GM23248 (cell line): ENCODE measurements at regions of chr5 and their contacts with region 1.

Region 1: DNA sequence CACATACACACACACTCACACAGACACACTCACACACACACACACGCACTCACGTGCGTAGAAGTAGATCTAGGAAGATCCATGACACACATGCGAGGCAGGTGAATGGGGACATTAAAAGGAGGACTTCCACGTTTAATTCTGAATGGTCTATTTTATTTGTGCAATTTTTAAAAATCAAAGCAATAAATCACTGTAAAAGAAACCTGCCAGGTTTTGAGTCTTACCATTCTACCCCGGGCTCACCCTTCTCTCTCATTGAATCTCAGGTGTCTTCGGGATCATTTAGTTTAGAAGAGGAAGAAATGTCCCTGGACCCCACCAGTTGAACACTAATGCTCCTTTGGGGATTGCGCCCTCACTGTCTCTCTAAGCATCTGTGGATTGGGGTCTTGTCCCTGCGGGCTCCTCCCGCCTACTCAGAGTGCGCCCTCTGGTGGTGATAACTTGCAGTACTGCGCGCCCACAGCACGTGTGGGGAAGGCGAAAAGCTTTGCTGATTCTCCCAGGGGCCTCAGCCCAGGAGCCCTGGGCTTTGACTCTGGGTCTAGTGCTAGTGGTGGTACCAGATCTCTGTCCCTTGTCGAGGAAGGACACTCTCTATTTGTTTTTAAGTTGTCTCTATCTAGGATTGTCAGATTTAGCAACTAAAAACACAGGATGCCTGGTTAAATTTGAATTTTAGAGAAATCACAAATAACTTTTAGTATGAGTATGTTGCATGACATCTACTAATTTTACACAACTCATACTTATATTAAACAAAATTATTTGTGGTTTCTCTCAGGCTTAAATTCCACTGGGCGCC is 34.8 kb downstream of the BOD1 start:
- DNase-seq: peak; percentile 64
- H3K4me3 ChIP-seq: no peak overlapping the region
- H3K27ac ChIP-seq: no peak overlapping the region
- H3K4me1 ChIP-seq: peaks cover 4% of the 10 kb centered on the region; the same call in 1 of the 2 replicates
- H3K27me3 ChIP-seq: no peaks in the 10 kb centered on the region

Region 2: GRCh38 chr5:173163219-173163618 is 418.4 kb before region 1 on chr5:
- in situ Hi-C with region 1: loop called (anchors 25 kb)
- DNase-seq: no peak
- H3K4me3 ChIP-seq: no peak overlapping the region
- H3K27ac ChIP-seq: no peak overlapping the region
- H3K4me1 ChIP-seq: no peaks in the 10 kb centered on the region
- H3K27me3 ChIP-seq: no peaks in the 10 kb centered on the region

Region 3: GRCh38 chr5:173187054-173187789 is 394.4 kb before region 1 on chr5:
- in situ Hi-C with region 1: no loop called
- DNase-seq: no peak
- H3K4me3 ChIP-seq: no peak overlapping the region
- H3K27ac ChIP-seq: no peak overlapping the region
- H3K4me1 ChIP-seq: no peaks in the 10 kb centered on the region
- H3K27me3 ChIP-seq: peaks cover 28% of the 10 kb centered on the region